ENCODE measurements at regions of chr12 and their contacts with region 1.

Region 1: GRCh38 chr12:114913871-114914801 is 230.2 kb upstream of the TBX3 start:
- DNase-seq: peak; percentile 75
- H3K4me3 ChIP-seq: no peak overlapping the region
- H3K27me3 ChIP-seq: no peaks in the 10 kb centered on the region
- CTCF ChIP-seq: no peak

Region 2: DNA sequence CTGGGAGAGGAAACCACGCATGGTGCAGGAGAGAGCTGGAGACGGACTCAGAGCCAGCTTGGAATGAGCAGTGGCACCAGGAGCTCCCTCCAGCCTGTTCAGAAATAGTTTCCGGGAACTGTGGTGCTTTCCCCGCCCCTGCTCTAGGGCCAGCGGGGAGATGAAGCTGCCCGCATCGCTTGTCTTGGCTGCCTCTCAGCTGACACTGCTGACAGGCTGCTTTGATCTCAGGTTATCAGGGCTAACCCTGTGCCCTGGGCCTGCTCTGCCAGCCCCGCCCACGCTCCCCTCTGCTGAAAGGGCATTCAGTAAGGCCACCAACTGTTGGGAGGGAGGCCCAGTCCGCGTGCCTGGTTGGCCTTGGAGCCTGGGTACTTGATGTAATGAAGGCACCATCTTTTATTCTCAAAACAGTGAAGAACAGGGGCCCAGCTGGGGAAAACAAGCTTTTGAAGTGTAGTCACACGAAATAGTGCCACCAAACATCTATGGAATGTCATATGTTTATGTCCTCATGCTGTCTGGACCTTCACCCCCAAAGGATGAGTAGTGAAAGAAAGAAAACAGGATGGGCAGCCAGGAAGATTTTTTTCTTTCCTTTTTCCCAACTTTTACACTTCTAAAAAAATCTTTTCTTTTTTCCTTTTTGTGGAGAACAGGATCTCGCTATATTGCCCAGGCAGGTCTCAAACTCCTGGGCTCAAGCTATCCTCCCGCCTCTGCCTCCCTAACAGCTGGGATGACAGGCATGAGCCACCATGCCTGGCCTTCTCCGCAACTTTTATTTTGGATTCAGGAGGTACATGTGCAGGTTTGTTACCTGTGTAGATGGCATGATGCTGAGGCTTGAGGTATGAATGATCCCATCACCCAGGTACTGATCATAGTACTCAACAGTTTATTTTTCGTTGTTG is 114.3 kb before region 1 on chr12:
- CTCF ChIA-PET with region 1: no interaction called
- POLR2A ChIA-PET with region 1: interaction called, 10 read pairs
- DNase-seq: peak; percentile 16
- H3K4me3 ChIP-seq: no peak overlapping the region
- H3K27me3 ChIP-seq: no peaks in the 10 kb centered on the region
- CTCF ChIP-seq: no peak

Region 3: GRCh38 chr12:114924946-114925475 is 10.9 kb after region 1 on chr12:
- CTCF ChIA-PET with region 1: no interaction called
- POLR2A ChIA-PET with region 1: no interaction called
- DNase-seq: no peak
- H3K4me3 ChIP-seq: no peak overlapping the region
- H3K27me3 ChIP-seq: no peaks in the 10 kb centered on the region
- CTCF ChIP-seq: no peak